ENCODE measurements at regions of chr4 and their contacts with region 1.

Region 1: GRCh38 chr4:112775801-112776200 is 138.9 kb downstream of the LARP7 start:
- DNase-seq: no peak
- H3K4me3 ChIP-seq: no peak overlapping the region
- CTCF ChIP-seq: no peak
- POLR2A ChIP-seq: no peak

Region 2: DNA sequence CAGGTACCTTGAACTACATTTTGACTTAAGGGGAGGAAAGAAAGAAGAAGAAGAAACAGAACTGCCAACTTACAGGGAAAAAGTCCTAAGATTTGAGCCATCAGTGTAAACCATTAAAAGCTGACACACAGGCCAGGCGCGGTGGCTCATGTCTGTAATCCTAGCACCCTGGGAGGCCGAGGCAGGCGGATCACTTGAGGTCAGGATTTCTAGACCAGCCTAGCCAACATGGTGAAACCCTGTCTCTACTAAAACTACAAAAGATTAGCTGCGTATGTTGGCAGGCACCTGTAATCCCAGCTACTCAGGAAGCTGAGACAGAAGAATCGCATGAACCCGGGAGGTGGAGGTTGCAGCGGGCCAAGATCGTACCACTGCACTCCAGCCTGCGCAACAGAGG is 1020.2 kb before region 1 on chr4:
- intact Hi-C with region 1: loop called (anchors 5 kb)
- DNase-seq: no peak
- H3K4me3 ChIP-seq: no peak overlapping the region
- CTCF ChIP-seq: no peak
- POLR2A ChIP-seq: no peak

Region 3: GRCh38 chr4:112807083-112807482 is 31.3 kb after region 1 on chr4:
- intact Hi-C with region 1: no loop called
- DNase-seq: no peak
- H3K4me3 ChIP-seq: no peak overlapping the region
- CTCF ChIP-seq: no peak
- POLR2A ChIP-seq: no peak